ENCODE measurements at regions of chr6 and their contacts with region 1.

Region 1: GRCh38 chr6:138817822-138818308 is 22.0 kb downstream of the ECT2L start:
- H3K4me3 ChIP-seq: no peak overlapping the region
- H3K27ac ChIP-seq: no peak overlapping the region
- H3K4me1 ChIP-seq: peaks cover 13% of the 10 kb centered on the region
- CTCF ChIP-seq: no peak

Region 2: GRCh38 chr6:138805016-138805765 is 12.7 kb before region 1 on chr6:
- CTCF ChIA-PET with region 1: interaction called, 10 read pairs
- POLR2A ChIA-PET with region 1: no interaction called
- H3K4me3 ChIP-seq: no peak overlapping the region
- H3K27ac ChIP-seq: no peak overlapping the region
- H3K4me1 ChIP-seq: no peaks in the 10 kb centered on the region
- CTCF ChIP-seq: no peak

Region 3: DNA sequence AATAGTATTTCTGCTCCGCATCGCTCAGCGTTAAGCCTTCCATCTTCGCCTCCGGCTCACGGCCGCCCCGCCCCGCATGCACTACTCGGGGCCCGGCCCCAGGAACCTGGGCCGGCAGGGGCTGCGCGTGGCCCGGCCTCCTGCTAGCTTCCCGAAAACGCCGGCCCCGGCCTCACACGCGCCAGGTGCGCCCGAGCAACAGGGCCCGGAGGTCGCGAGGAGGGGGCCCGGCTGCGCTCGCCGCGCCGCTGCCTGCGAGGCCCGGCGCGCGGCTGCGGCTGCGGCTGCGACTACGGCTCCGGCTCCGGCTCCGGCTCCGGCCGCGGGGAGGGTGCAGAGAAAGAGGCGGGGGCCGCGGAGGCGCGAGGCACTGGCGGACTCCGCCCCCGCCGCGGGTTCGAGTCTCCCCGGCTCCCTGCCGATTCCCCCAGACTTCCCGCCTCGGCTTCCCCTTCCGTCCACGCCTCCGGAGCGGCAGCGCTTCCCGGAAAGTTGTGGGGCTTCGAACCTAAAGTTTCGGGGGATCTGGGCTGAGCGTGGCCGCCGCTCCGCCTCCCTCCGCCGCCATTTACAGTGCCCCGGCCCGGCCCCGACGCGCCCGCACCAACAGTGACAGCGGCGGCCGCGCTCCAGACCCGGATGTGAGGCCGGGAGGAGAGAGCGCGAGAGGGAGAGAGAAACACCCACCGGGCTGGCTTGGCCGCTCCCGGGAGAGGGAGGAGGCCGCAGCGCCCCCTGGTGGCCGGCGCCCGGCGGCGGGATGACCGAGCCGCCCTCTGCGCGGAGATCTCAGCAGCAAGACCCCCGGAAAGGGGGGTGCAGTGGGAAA is 170.0 kb after region 1 on chr6 and contains the start of gene REPS1:
- CTCF ChIA-PET with region 1: interaction called, 26 read pairs
- POLR2A ChIA-PET with region 1: interaction called, 3 read pairs
- H3K4me3 ChIP-seq: peak within 1 kb of the TSS; percentile 94
- H3K27ac ChIP-seq: peak within 1 kb of the TSS; percentile 83
- H3K4me1 ChIP-seq: peaks cover 22% of the 10 kb centered on the region
- CTCF ChIP-seq: peak; percentile 91

Region 4: DNA sequence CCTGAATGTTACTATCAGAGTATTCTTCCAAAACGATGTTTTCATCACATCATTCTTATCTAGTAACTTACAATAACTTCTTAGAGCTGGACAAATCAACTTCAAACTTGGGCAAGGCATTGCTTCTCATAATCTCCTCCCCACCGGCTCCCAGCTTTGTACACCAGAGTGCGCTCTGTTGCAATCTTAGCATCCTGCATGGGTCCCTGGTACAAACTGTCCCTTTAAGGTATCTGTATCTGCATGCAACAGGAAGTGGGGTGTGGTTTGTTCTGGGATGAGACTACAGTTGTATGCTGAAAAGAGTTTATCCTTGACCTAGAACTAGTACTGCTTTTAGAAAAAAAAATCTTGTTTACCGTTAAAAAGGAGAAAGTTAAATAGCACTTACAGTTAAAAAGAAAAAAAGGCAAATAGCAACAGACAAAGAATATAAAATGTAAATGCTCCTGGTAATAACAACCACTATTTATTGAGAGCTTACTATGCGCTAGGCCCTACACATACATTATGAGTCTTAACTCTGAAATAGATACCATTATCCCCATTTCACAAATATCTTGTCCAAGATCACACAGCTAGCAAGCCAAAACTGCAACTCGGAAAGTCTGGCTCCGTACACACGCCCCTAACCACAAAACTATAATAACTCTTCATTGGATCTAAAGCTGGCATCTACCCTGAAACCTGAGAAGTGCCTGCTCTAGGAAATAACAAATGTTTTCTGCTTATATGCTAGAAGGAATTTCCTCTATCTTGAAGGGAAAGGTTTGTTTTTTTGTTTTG is 307.2 kb after region 1 on chr6:
- CTCF ChIA-PET with region 1: interaction called, 11 read pairs
- POLR2A ChIA-PET with region 1: no interaction called
- H3K4me3 ChIP-seq: no peak overlapping the region
- H3K27ac ChIP-seq: no peak overlapping the region
- H3K4me1 ChIP-seq: peaks cover 3% of the 10 kb centered on the region
- CTCF ChIP-seq: peak; percentile 42; the same call in 1 of the 2 replicates

Region 5: GRCh38 chr6:139219271-139219729 is 401.4 kb after region 1 on chr6:
- CTCF ChIA-PET with region 1: interaction called, 11 read pairs
- POLR2A ChIA-PET with region 1: no interaction called
- H3K4me3 ChIP-seq: no peak overlapping the region
- H3K27ac ChIP-seq: no peak overlapping the region
- H3K4me1 ChIP-seq: no peaks in the 10 kb centered on the region
- CTCF ChIP-seq: peak; percentile 88

Region 6: GRCh38 chr6:139364302-139364981 is 546.6 kb after region 1 on chr6:
- CTCF ChIA-PET with region 1: interaction called, 20 read pairs
- POLR2A ChIA-PET with region 1: no interaction called
- H3K4me3 ChIP-seq: no peak overlapping the region
- H3K27ac ChIP-seq: no peak overlapping the region
- H3K4me1 ChIP-seq: peaks cover 15% of the 10 kb centered on the region
- CTCF ChIP-seq: 0 out of 2 replicates have a peak, but pooled peaks have one; percentile 28